GM12878 (cell line): ENCODE measurements at regions of chr5 and their contacts with region 1.

Region 1: GRCh38 chr5:77379558-77380061 is 112.5 kb downstream of the WDR41 start:
- DNase-seq: peak; percentile 67
- ATAC-seq: peak; percentile 93
- H3K4me3 ChIP-seq: no peak overlapping the region
- H3K27ac ChIP-seq: peak overlapping the region; percentile 42; the same call in 1 of the 2 replicates
- H3K4me1 ChIP-seq: peaks cover 22% of the 10 kb centered on the region
- H3K27me3 ChIP-seq: no peaks in the 10 kb centered on the region
- CTCF ChIP-seq: no peak
- EP300 ChIP-seq: peak; percentile 67 to 90
- POLR2A ChIP-seq: no peak
- RAD21 ChIP-seq: no peak

Region 2: GRCh38 chr5:77356740-77357139 is 22.9 kb before region 1 on chr5:
- CTCF ChIA-PET with region 1: interaction called, 4 read pairs
- POLR2A ChIA-PET with region 1: no interaction called
- RAD21 ChIA-PET with region 1: interaction called, 5 read pairs
- SMC1A ChIA-PET with region 1: interaction called, 18 read pairs
- in situ Hi-C with region 1: no loop called
- intact Hi-C with region 1: no loop called
- DNase-seq: peak; percentile 84
- ATAC-seq: peak; percentile 94
- H3K4me3 ChIP-seq: no peak overlapping the region
- H3K27ac ChIP-seq: no peak overlapping the region
- H3K4me1 ChIP-seq: peaks cover 16% of the 10 kb centered on the region
- H3K27me3 ChIP-seq: no peaks in the 10 kb centered on the region
- CTCF ChIP-seq: no peak
- EP300 ChIP-seq: no peak
- POLR2A ChIP-seq: no peak
- RAD21 ChIP-seq: peak; percentile 38; the same call in 1 of the 2 replicates

Region 3: DNA sequence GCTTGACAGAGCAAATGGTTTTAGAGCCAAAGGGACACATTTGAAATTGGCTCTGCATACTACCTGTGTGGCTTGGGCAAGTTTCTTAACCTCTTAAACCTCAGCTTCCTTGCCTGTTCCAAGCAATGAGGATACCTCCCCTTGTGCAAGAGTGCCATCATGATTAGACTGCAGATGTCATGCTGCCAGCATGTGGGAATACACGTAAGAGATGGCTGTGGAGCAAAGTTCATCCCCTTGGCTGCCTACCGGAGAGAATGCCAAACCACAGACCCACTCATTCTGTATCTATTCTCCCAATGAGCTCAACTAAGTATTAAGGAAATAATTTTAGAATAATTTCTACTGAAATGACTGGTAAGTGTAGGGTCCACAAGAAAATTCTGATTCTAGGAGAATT is 11.2 kb after region 1 on chr5:
- CTCF ChIA-PET with region 1: interaction called, 8 read pairs
- POLR2A ChIA-PET with region 1: interaction called, 6 read pairs
- RAD21 ChIA-PET with region 1: interaction called, 29 read pairs
- SMC1A ChIA-PET with region 1: interaction called, 26 read pairs
- in situ Hi-C with region 1: no loop called
- intact Hi-C with region 1: no loop called
- DNase-seq: no peak
- ATAC-seq: no peak
- H3K4me3 ChIP-seq: no peak overlapping the region
- H3K27ac ChIP-seq: no peak overlapping the region
- H3K4me1 ChIP-seq: no peaks in the 10 kb centered on the region
- H3K27me3 ChIP-seq: no peaks in the 10 kb centered on the region
- CTCF ChIP-seq: no peak
- EP300 ChIP-seq: no peak
- POLR2A ChIP-seq: no peak
- RAD21 ChIP-seq: no peak

Region 4: GRCh38 chr5:77396017-77396416 is 16.4 kb after region 1 on chr5:
- CTCF ChIA-PET with region 1: interaction called, 8 read pairs
- POLR2A ChIA-PET with region 1: interaction called, 6 read pairs
- RAD21 ChIA-PET with region 1: interaction called, 29 read pairs
- SMC1A ChIA-PET with region 1: interaction called, 26 read pairs
- in situ Hi-C with region 1: no loop called
- intact Hi-C with region 1: no loop called
- DNase-seq: peak; percentile 60
- ATAC-seq: peak; percentile 95
- H3K4me3 ChIP-seq: no peak overlapping the region
- H3K27ac ChIP-seq: no peak overlapping the region
- H3K4me1 ChIP-seq: no peaks in the 10 kb centered on the region
- H3K27me3 ChIP-seq: no peaks in the 10 kb centered on the region
- CTCF ChIP-seq: no peak
- EP300 ChIP-seq: peak in 1 of 2 experiments; percentile 31; a peak in 1 of 4 replicates
- POLR2A ChIP-seq: no peak
- RAD21 ChIP-seq: no peak